Ascending aorta (tissue), 2 donors: ENCODE measurements at regions of chr13 and their contacts with region 1.

Region 1: DNA sequence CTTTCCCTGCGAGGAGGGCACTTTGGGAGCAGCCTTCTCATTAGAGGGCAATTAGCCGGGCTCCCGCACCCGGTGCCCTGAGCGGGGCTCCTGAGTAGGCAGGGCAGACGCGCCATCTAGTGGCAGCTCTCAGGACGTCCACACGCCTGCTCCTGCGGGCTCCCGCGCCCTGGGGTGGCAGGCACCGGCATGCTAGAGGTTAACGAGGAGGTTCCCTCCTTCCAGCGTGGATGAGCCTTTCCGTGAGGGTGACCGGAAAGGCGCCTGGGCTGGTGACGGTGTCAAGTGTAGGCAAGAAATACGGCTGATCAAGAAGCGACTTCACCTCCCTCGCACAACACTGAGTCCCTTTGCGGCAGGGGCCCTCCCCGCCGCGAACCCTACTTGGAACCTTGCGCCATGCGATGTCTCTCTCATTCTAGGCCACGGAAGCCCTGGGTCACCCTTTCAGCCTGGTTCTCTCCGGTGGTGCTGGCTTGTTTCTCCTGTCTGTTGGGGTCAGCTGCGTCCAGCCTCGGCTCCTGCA is 67.7 kb downstream of the ALOX5AP start:
- DNase-seq: peak; percentile 47 to 95
- H3K4me3 ChIP-seq: peak overlapping the region; percentile 43 to 54
- H3K27ac ChIP-seq: peak overlapping the region in 1 of 2 donors; percentile 60
- H3K4me1 ChIP-seq: peaks cover 0 to 13% of the 10 kb centered on the region in 2 donors
- H3K27me3 ChIP-seq: no peaks in the 10 kb centered on the region
- CTCF ChIP-seq: peak; percentile 89 to 97 (median 91)

Region 2: GRCh38 chr13:30132623-30133553 is 670.1 kb before region 1 on chr13:
- intact Hi-C with region 1: loop called (anchors 5 kb)
- DNase-seq: peak; percentile 87 to 98
- H3K4me3 ChIP-seq: peak overlapping the region in 1 of 2 donors; percentile 10
- H3K27ac ChIP-seq: no peak overlapping the region
- H3K4me1 ChIP-seq: no peaks in the 10 kb centered on the region
- H3K27me3 ChIP-seq: no peaks in the 10 kb centered on the region
- CTCF ChIP-seq: peak; percentile 83 to 95 (median 84)

Region 3: DNA sequence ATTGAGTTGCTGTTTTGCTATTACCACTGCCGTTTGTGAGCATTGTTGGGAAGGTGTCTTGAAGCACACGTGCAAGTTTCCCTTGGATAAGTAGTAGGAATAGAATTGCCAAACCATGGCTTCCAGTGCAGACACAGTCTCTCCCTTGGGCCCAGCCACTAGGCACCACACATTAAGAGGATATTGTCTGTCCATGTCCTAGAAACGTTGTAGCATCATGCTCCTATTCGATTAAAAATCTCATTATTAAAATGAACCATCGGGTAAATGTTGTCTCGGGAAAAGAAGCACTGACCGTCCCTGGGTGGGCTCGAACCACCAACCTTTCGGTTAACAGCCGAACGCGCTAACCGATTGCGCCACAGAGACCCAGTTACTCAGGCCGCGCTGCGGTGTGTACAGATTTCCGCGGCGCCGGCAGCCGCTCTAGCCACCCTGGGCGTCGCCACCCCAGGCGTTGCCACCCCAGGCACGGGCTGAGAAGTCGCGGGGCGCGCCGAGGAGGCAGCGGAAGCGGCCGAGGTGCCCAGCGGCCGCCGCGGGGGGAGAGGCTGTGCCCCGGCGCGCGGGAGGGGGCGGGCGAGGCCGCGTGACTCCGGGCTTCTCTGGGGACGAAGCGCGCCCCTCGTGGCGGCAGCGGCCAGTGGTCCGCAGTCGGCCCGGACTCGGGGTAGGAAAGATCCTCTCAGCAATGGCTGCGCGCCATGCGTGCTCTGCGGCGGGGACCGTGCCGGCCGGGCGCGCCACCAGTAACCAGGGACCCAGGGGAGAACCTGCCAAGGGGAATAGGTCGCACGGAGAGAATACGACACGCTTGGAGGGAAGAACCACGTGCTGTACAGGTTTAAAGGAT is 129.1 kb before region 1 on chr13:
- intact Hi-C with region 1: loop called (anchors 2 kb)
- DNase-seq: peak; percentile 79 to 96
- H3K4me3 ChIP-seq: peak overlapping the region; percentile 53 to 64
- H3K27ac ChIP-seq: peak overlapping the region; percentile 59 to 88
- H3K4me1 ChIP-seq: no peaks in the 10 kb centered on the region
- H3K27me3 ChIP-seq: no peaks in the 10 kb centered on the region
- CTCF ChIP-seq: peak; percentile 58 to 81 (median 61)

Region 4: GRCh38 chr13:30837227-30838159 is 34.5 kb after region 1 on chr13:
- intact Hi-C with region 1: no loop called
- DNase-seq: no peak
- H3K4me3 ChIP-seq: no peak overlapping the region
- H3K27ac ChIP-seq: no peak overlapping the region
- H3K4me1 ChIP-seq: no peaks in the 10 kb centered on the region
- H3K27me3 ChIP-seq: no peaks in the 10 kb centered on the region
- CTCF ChIP-seq: no peak

Region 5: DNA sequence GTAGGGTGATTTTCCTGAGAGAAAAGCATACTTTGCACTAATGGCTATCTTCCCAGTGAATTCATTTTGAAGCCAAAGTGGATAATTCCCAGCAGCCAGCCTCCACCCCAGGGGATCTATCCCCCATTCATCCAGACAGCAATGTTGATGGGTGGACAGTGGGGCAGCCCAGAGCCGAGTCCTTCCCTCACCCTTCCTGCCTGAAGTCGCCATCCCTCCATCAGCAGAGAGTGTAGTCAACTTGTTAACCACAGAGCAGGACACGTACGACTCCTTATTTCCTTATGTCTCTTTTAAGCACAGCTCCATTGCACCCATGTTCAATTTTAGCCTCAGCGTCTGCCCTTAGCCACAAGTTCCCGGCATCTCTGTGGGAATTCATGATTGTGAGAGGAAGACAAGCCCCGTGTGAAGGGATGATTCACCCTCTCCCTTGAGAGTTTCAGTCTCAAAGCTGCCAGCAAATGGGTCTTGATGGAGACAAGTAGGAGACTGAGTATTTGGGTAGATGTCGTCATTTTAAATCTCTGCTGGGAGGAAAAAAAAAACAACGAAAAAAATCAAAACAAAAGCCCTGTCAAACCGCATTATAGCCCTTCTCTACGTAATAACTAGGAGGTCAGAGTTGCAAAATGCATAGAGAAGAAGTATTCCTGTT is 44.8 kb after region 1 on chr13:
- intact Hi-C with region 1: loop called (anchors 5 kb)
- DNase-seq: peak; percentile 48 to 90
- H3K4me3 ChIP-seq: peak overlapping the region in 1 of 2 donors; percentile 1
- H3K27ac ChIP-seq: peak overlapping the region; percentile 74 to 87
- H3K4me1 ChIP-seq: peaks cover 0 to 7% of the 10 kb centered on the region in 2 donors
- H3K27me3 ChIP-seq: no peaks in the 10 kb centered on the region
- CTCF ChIP-seq: no peak

Region 6: DNA sequence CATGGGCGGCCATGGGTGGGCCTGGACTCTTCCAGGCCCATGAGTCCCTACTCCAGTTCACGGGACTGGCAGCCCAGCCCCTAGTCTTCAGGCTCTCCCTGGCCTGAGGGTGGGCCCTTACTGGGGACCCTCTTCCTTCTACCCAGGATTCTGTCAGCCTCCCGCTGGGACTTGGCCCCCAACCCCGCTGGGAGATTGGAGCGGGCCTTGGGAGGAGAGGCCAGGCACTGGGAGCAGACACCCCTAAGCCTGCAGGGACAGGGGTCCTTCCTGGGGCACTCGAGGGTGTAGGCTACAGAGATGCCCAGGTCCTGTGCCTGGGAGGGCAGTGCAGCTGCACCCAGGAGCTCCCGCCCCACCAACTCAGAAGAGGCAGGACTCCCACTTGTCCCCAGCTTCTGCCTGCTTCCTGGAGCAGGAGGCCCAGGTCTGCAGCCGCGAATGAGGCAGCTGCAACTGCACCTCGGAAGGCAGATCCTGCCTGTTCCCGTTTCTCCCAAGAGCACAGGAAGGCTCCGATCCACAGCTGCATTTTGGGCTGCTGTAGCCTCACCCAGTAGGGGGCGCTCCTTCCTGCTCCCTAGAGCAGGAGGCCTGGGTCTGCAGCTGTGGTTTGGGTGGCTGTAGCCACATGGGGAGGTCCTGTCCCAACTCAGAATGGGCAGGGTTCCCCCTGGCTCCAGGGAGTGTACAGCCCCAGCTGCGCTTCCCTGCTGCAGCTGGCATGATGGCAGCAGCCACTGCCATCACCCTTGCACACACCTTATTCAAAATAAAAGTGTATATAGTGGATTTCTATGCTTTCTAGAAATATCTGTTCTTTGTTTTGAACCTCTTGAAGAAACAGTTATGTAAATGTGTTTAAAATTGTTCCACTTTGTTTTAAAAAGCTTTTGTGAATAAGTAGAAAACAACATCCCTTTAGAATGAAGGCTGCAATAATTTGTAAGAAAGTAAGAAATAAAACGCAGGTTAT is 176.3 kb after region 1 on chr13:
- intact Hi-C with region 1: loop called (anchors 5 kb)
- DNase-seq: no peak
- H3K4me3 ChIP-seq: no peak overlapping the region
- H3K27ac ChIP-seq: no peak overlapping the region
- H3K4me1 ChIP-seq: peaks cover 0 to 14% of the 10 kb centered on the region in 2 donors
- H3K27me3 ChIP-seq: no peaks in the 10 kb centered on the region
- CTCF ChIP-seq: peak in 1 of 3 experiments; percentile 44